ENCODE measurements at regions of chr17 and their contacts with region 1.

Region 1: GRCh38 chr17:75601057-75602051 is 13.8 kb downstream of the MYO15B start:
- DNase-seq: peak; percentile 71 to 84 (median 83)
- H3K4me3 ChIP-seq: no peak overlapping the region
- H3K27ac ChIP-seq: no peak overlapping the region
- H3K4me1 ChIP-seq: no peaks in the 10 kb centered on the region
- H3K27me3 ChIP-seq: no peaks in the 10 kb centered on the region

Region 2: DNA sequence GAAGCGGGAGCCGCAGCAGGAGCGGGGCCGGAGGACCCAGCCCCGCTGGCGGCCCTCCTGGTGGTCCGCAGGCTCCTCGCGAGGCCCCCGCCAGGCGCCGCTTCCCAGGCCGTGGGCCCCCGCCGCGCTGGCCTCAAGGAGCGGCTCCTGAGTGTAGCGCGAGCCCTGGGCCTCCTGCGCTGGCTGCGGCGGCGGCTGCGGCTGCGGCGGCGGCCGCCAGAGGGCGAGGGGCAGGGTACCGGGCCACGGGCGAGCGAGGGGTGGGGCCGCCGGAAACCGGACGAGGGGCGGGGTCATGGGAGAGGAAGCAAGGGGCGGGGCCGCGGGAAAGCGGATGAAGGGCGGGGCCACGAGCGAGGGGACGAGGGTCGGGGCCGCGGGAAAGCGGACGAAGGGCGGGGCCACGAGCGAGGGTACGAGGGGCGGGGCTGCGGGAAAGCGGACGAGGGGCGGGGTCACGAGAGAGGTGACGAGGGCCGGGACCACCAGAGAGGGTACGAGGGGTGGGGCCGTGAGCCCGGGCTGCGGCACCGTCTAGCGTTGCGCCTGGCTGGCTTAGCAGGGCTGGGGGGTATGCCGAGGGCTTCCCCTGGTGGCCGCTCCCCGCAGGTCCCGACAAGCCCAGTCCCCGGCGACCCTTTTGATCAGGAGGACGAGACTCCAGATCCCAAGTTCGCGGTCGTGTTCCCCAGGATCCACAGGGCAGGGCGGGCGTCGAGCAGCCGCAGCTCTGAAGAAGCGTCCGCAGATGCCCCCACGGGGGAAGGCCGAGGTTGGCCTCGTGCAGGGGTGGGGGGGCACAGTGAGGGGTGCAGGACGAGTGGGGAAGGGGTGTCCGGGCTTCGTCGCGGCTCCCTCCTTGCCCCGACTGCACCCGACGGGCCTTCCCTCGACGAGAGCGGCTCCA is 12.1 kb before region 1 on chr17:
- CTCF ChIA-PET with region 1: interaction called, 18 read pairs
- POLR2A ChIA-PET with region 1: interaction called, 4 read pairs
- DNase-seq: peak; percentile 88 to 93 (median 93)
- H3K4me3 ChIP-seq: peak overlapping the region; percentile 73 to 93 (median 84)
- H3K27ac ChIP-seq: peak overlapping the region; percentile 77 to 86
- H3K4me1 ChIP-seq: peaks cover 5 to 30% (median 24%) of the 10 kb centered on the region in 4 experiments
- H3K27me3 ChIP-seq: no peaks in the 10 kb centered on the region

Region 3: DNA sequence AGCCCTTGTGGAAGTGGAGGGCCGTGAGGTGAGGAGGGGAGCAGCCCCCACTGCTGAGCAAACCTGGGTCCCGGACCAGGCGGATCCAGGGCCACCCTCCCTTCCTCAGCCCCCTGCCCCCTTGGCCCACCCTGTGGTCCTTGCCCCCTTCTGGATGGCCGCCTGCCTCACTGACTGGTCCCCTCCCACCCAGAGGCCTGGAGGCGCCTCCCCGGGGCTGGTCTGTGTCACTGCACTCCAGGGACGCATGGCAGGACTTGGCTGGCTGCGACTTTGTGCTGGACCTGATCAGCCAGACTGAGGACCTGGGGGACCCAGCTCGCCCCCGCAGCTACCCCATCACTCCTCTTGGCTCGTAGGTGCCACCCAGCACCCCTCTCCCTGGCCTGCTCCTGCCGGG is 12.7 kb after region 1 on chr17:
- CTCF ChIA-PET with region 1: interaction called, 14 read pairs
- POLR2A ChIA-PET with region 1: no interaction called
- DNase-seq: no peak
- H3K4me3 ChIP-seq: no peak overlapping the region
- H3K27ac ChIP-seq: no peak overlapping the region
- H3K4me1 ChIP-seq: no peaks in the 10 kb centered on the region
- H3K27me3 ChIP-seq: no peaks in the 10 kb centered on the region

Region 4: DNA sequence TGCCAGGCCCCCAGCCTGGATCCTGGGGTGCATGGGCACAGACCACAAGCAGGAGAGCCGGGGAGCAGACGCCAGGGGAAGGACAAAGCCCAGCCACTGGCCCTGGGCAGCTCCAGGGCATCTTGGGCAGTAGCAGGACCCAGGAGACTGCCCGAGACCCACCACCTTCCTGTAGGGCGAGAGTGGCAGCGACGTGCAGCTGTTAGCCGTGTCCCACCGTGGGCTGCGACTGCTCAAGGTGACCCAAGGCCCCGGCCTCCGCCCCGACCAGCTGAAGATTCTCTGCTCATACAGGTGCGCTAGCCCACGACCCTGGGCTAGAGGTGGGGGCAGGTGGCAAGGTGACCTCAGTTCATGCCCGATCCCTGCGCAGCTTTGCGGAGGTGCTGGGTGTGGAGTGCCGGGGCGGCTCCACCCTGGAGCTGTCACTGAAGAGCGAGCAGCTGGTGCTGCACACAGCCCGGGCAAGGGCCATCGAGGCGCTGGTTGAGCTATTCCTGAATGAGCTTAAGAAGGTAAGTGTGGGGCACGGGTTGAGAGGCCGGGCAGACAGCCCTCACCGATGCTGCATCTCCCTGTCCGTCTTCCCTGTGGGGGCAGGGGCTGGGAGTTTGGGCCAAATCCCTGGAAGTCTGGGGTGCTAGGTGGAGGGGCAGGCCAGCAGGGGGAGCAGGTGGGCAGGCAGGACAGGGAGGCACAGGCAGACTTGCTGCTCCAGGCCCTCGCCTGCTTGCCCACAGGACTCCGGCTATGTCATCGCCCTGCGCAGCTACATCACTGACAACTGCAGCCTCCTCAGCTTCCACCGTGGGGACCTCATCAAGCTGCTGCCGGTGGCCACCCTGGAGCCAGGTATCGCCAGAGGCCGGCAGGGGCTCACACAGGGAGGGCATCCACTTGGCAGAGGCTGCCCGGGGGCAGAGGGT is 18.4 kb after region 1 on chr17:
- CTCF ChIA-PET with region 1: interaction called, 18 read pairs
- POLR2A ChIA-PET with region 1: no interaction called
- DNase-seq: peak in 2 of 3 donors; percentile 35 to 44
- H3K4me3 ChIP-seq: no peak overlapping the region
- H3K27ac ChIP-seq: no peak overlapping the region
- H3K4me1 ChIP-seq: no peaks in the 10 kb centered on the region
- H3K27me3 ChIP-seq: no peaks in the 10 kb centered on the region

Region 5: DNA sequence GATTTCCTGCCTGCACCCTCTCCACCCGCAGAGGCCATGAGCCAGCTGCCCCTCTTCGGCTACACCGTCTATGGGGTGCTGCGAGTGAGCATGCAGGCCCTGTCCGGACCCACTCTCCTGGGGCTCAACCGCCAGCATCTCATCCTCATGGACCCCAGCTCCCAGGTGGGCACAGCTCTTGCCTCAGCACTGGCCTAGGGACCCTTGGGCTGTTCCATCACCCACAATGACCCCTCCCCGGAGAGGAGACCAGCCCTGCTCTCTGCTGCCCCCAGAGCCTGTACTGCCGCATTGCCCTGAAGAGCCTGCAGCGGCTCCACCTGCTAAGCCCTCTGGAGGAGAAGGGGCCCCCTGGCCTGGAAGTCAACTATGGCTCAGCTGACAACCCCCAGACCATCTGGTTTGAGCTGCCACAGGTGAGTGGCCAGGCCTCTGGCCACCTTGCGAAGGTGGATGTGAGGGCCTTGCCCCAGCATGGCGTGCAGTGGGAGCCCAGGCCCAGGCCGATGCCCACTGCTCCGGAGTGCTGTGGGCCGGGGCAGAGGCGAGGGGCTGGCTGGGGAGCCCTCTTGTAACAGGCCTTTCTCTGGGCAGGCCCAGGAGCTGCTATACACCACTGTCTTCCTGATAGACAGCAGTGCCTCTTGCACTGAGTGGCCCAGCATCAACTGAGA is 24.6 kb after region 1 on chr17:
- CTCF ChIA-PET with region 1: interaction called, 30 read pairs
- POLR2A ChIA-PET with region 1: interaction called, 5 read pairs
- DNase-seq: peak in 2 of 3 donors; percentile 50 to 51
- H3K4me3 ChIP-seq: no peak overlapping the region
- H3K27ac ChIP-seq: no peak overlapping the region
- H3K4me1 ChIP-seq: peaks cover 0 to 2% (median 0%) of the 10 kb centered on the region in 4 experiments
- H3K27me3 ChIP-seq: no peaks in the 10 kb centered on the region

Region 6: GRCh38 chr17:75652915-75653549 is 51.7 kb after region 1 on chr17:
- CTCF ChIA-PET with region 1: interaction called, 11 read pairs
- POLR2A ChIA-PET with region 1: no interaction called
- DNase-seq: peak; percentile 71 to 83 (median 83)
- H3K4me3 ChIP-seq: peak overlapping the region in 2 of 7 experiments; percentile 11 to 24
- H3K27ac ChIP-seq: peak overlapping the region in 1 of 2 experiments; percentile 43
- H3K4me1 ChIP-seq: peaks cover 0 to 15% (median 10%) of the 10 kb centered on the region in 4 experiments
- H3K27me3 ChIP-seq: no peaks in the 10 kb centered on the region